ENCODE measurements at regions of chr17 and their contacts with region 1.

Region 1: GRCh38 chr17:39916918-39917317 is 1.5 kb downstream of the GSDMB start:
- DNase-seq: peak; percentile 58 to 67
- H3K4me3 ChIP-seq: no peak overlapping the region
- H3K4me3 Mint-ChIP-seq: peak overlapping the region; percentile 23
- H3K27ac Mint-ChIP-seq: peak overlapping the region; percentile 90
- H3K4me1 ChIP-seq: peaks cover 27% of the 10 kb centered on the region
- H3K4me1 Mint-ChIP-seq: peaks cover 20% of the 10 kb centered on the region
- H3K27me3 ChIP-seq: no peaks in the 10 kb centered on the region
- H3K27me3 Mint-ChIP-seq: no peaks in the 10 kb centered on the region
- CTCF ChIP-seq: peak; percentile 39 to 51

Region 2: GRCh38 chr17:39903158-39903884 is 13.6 kb before region 1 on chr17:
- CTCF ChIA-PET with region 1: no interaction called
- POLR2A ChIA-PET with region 1: no interaction called
- intact Hi-C with region 1: no loop called
- DNase-seq: no peak
- H3K4me3 ChIP-seq: no peak overlapping the region
- H3K4me3 Mint-ChIP-seq: no peak overlapping the region
- H3K27ac Mint-ChIP-seq: no peak overlapping the region
- H3K4me1 ChIP-seq: peaks cover 9% of the 10 kb centered on the region; the same call in 1 of the 2 replicates
- H3K4me1 Mint-ChIP-seq: peaks cover 10% of the 10 kb centered on the region
- H3K27me3 ChIP-seq: no peaks in the 10 kb centered on the region
- H3K27me3 Mint-ChIP-seq: no peaks in the 10 kb centered on the region
- CTCF ChIP-seq: no peak

Region 3: DNA sequence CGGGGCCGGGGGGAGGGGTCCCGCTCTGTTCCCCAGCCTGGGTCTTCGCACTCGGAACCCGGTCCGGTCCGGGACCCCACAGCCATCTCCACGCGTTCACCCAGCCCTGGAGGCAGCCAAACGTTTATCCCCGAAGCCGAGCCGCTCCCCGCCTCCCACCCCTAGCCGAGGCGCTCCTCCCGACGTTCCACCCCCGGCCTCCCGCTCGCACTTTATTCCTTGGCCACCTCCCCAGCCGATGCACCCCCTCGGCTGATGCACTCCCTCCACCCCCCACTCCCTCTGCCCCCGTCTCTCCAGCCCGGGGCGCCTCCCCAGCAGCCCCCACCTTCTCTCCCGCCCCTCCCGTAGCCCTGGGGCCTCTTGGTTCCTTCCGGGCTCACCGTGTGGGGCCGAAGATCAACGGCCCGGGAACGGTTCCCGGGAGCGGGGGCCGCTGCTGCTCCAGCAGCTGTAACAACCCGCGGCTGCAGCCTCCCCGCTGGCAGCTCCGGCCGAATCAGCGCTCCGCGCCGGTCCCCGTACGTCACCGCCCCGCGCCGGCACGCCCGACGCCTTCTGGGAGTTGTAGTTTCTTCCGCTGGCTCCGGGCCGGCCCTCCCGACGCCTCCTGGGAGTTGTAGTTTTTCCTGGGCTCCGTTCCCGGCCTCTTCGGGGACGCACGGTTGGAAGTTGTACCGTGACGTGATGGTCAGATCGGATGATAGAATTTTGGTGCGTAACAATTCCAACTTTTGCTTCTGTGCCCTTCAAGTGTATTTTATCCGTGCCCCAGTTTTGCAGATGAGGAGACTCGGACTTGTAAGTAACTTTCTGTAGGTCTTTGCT is 10.4 kb after region 1 on chr17 and contains the starts of genes LRRC3C and ORMDL3:
- CTCF ChIA-PET with region 1: no interaction called
- POLR2A ChIA-PET with region 1: no interaction called
- intact Hi-C with region 1: loop called (anchors 1 kb)
- DNase-seq: peak; percentile 95 to 97
- H3K4me3 ChIP-seq: peak within 1 kb of the TSS; percentile 89
- H3K4me3 Mint-ChIP-seq: peak within 1 kb of the TSS; percentile 87
- H3K27ac Mint-ChIP-seq: peak within 1 kb of the TSS; percentile 97
- H3K4me1 ChIP-seq: peaks cover 29% of the 10 kb centered on the region
- H3K4me1 Mint-ChIP-seq: peaks cover 7% of the 10 kb centered on the region
- H3K27me3 ChIP-seq: no peaks in the 10 kb centered on the region
- H3K27me3 Mint-ChIP-seq: no peaks in the 10 kb centered on the region
- CTCF ChIP-seq: no peak
- total RNA-seq, gene LRRC3C: not detected in 2 replicates
- total RNA-seq, gene ORMDL3: 70.6 and 75.2 TPM in 2 replicates

Region 4: GRCh38 chr17:39970157-39970692 is 53.3 kb after region 1 on chr17:
- CTCF ChIA-PET with region 1: interaction called, 3 read pairs
- POLR2A ChIA-PET with region 1: interaction called, 10 read pairs
- intact Hi-C with region 1: no loop called
- DNase-seq: no peak
- H3K4me3 ChIP-seq: no peak overlapping the region
- H3K4me3 Mint-ChIP-seq: no peak overlapping the region
- H3K27ac Mint-ChIP-seq: no peak overlapping the region
- H3K4me1 ChIP-seq: no peaks in the 10 kb centered on the region
- H3K4me1 Mint-ChIP-seq: peaks cover 7% of the 10 kb centered on the region
- H3K27me3 ChIP-seq: no peaks in the 10 kb centered on the region
- H3K27me3 Mint-ChIP-seq: peaks cover 3% of the 10 kb centered on the region
- CTCF ChIP-seq: no peak